CD4-positive, alpha-beta memory T cell (primary cell): ENCODE measurements at regions of chr14 and their contacts with region 1.

Region 1: DNA sequence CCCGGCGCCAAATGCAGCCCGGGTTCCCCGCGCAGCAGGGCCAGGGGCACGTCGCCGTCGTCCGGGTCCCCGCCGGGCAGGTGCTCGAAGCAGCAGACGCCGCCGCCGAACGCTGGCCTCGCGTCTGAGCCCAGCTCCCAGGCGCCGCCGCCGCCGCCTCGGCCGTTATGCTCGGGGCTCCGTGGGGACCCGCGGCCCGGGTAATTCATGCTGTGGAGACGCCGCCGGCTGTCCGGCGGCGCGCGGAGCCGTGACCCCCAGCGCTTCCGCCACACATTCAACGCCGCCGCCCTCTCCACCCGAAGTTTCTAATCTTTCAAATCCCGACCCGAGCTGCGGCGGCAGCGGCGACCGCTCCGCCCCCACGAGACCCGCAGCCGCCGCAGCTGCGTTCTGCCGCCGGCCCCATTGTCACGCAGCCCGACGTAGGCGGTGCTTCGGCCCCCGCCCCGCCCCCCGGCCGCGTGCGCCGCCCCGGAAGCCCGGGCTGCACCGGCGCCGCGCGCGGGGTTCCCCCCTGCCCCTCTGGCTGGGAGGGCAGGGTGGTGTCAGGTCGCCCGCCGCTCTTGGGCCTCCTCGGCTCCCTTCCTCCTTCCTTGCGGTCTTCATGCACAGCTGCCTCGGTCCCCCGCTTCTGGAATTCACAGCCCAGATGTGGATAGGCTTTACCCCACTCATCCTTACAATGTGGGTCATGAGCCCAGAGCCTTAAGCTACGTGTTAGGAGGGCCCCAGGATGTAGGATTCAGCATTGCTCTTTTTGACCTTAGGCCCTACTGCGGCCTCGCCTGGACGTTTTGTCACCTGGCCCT is at the start of gene DDHD1:
- DNase-seq: peak; percentile 84 to 89 (median 87)
- H3K4me3 ChIP-seq: peak within 1 kb of the TSS; percentile 87 to 90
- H3K4me3 Mint-ChIP-seq: peak within 1 kb of the TSS; percentile 95 to 100 (median 99)
- H3K27ac ChIP-seq: peak within 1 kb of the TSS; percentile 87
- H3K27ac Mint-ChIP-seq: peak within 1 kb of the TSS; percentile 98 to 99 (median 99)
- H3K4me1 ChIP-seq: peaks cover 46% of the 10 kb centered on the region
- H3K4me1 Mint-ChIP-seq: peaks cover 36 to 58% (median 45%) of the 10 kb centered on the region in 4 donors
- H3K27me3 ChIP-seq: no peaks in the 10 kb centered on the region
- H3K27me3 Mint-ChIP-seq: no peaks in the 10 kb centered on the region
- total RNA-seq, gene DDHD1: 47.0 to 53.5 TPM

Region 2: DNA sequence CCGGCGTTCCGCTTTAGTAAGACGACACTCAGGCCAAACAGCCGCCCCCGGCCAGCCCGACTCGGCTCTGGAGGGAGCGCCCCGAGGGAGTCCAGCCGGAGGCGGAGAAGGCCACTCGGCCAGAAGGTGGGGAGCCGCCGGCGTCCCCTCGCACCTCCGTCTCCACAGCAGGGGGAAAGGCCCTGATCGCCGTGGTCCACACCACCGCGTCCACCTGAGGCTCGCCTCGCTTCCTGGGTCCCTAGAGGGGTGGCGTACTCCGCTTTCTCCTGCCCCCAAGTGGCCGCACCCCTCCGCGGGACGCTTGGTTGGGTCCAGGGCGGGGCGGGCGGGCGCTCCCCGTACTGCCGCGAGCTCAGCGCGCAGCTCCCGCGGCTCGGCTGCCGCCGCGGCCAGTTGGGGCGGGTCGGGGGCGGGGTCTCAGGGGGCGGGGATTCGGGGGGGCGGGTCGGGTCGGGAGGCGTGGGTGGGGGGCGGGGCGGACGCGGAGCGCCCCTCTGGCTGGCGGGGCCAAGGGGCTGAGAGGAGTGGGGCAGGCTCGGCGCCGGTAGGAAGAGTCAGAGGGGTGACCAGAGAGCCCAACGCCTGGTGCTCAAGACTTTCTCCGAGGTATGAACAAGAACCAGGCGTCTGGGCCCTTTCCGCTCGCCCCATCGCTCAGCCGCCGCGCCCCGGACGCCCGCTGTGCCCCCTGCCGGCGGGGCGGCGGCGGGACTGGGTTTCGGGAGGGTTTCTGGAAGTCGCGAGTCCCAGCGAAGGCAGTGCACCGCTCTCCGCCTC is 1501.5 kb before region 1 on chr14 and contains the start of gene FRMD6:
- CTCF ChIA-PET with region 1: interaction called, 3 read pairs
- POLR2A ChIA-PET with region 1: no interaction called
- intact Hi-C with region 1: loop called (anchors 5 kb)
- DNase-seq: peak; percentile 82 to 89 (median 83)
- H3K4me3 ChIP-seq: peak within 1 kb of the TSS; percentile 47 to 77
- H3K4me3 Mint-ChIP-seq: peak within 1 kb of the TSS; percentile 82 to 92 (median 85)
- H3K27ac ChIP-seq: peak within 1 kb of the TSS; percentile 36
- H3K27ac Mint-ChIP-seq: peak within 1 kb of the TSS in 6 of 7 donors; percentile 66 to 84 (median 72)
- H3K4me1 ChIP-seq: peaks cover 19% of the 10 kb centered on the region
- H3K4me1 Mint-ChIP-seq: peaks cover 7 to 16% (median 11%) of the 10 kb centered on the region in 4 donors
- H3K27me3 ChIP-seq: peaks cover 14% of the 10 kb centered on the region
- H3K27me3 Mint-ChIP-seq: peaks cover 14 to 18% of the 10 kb centered on the region in 2 donors
- total RNA-seq, gene FRMD6: 0.80 to 0.81 TPM

Region 3: GRCh38 chr14:52791203-52792096 is 361.6 kb before region 1 on chr14 and contains the start of gene GNPNAT1:
- CTCF ChIA-PET with region 1: no interaction called
- POLR2A ChIA-PET with region 1: interaction called, 8 read pairs
- intact Hi-C with region 1: loop called (anchors 1 kb)
- DNase-seq: peak; percentile 90 to 93 (median 92)
- H3K4me3 ChIP-seq: peak within 1 kb of the TSS; percentile 57 to 90
- H3K4me3 Mint-ChIP-seq: peak within 1 kb of the TSS; percentile 88 to 97 (median 92)
- H3K27ac ChIP-seq: peak within 1 kb of the TSS; percentile 70
- H3K27ac Mint-ChIP-seq: peak within 1 kb of the TSS; percentile 90 to 96 (median 94)
- H3K4me1 ChIP-seq: peaks cover 32% of the 10 kb centered on the region
- H3K4me1 Mint-ChIP-seq: peaks cover 27 to 48% (median 36%) of the 10 kb centered on the region in 4 donors
- H3K27me3 ChIP-seq: no peaks in the 10 kb centered on the region
- H3K27me3 Mint-ChIP-seq: no peaks in the 10 kb centered on the region
- total RNA-seq, gene GNPNAT1: 10.0 to 15.2 TPM

Region 4: DNA sequence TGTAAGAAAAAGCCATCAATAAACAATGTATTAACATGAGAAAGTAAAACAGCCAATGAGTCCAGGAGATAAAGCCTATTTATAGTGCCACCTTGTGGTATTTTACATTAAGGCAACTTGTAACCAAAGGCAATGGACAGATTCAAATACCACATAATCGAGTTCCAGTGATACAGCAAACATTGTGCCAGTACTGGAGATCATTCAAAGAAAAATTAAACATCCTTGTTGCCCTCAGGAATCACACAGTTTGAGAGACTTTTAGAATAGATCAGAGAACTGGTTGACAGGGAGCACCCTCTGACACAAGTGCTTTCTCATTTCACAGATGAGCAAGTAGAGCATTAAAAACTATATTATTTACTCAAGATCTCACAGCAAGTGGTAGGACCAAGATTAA is 98.1 kb before region 1 on chr14:
- CTCF ChIA-PET with region 1: interaction called, 23 read pairs
- POLR2A ChIA-PET with region 1: interaction called, 4 read pairs
- intact Hi-C with region 1: loop called (anchors 5 kb)
- DNase-seq: peak in 4 of 5 donors; percentile 20 to 39 (median 30)
- H3K4me3 ChIP-seq: no peak overlapping the region
- H3K4me3 Mint-ChIP-seq: no peak overlapping the region
- H3K27ac ChIP-seq: no peak overlapping the region
- H3K27ac Mint-ChIP-seq: peak overlapping the region in 3 of 7 donors; percentile 30 to 66 (median 31)
- H3K4me1 ChIP-seq: no peaks in the 10 kb centered on the region
- H3K4me1 Mint-ChIP-seq: peaks cover 0 to 3% (median under 1%) of the 10 kb centered on the region in 4 donors
- H3K27me3 ChIP-seq: no peaks in the 10 kb centered on the region
- H3K27me3 Mint-ChIP-seq: no peaks in the 10 kb centered on the region

Region 5: DNA sequence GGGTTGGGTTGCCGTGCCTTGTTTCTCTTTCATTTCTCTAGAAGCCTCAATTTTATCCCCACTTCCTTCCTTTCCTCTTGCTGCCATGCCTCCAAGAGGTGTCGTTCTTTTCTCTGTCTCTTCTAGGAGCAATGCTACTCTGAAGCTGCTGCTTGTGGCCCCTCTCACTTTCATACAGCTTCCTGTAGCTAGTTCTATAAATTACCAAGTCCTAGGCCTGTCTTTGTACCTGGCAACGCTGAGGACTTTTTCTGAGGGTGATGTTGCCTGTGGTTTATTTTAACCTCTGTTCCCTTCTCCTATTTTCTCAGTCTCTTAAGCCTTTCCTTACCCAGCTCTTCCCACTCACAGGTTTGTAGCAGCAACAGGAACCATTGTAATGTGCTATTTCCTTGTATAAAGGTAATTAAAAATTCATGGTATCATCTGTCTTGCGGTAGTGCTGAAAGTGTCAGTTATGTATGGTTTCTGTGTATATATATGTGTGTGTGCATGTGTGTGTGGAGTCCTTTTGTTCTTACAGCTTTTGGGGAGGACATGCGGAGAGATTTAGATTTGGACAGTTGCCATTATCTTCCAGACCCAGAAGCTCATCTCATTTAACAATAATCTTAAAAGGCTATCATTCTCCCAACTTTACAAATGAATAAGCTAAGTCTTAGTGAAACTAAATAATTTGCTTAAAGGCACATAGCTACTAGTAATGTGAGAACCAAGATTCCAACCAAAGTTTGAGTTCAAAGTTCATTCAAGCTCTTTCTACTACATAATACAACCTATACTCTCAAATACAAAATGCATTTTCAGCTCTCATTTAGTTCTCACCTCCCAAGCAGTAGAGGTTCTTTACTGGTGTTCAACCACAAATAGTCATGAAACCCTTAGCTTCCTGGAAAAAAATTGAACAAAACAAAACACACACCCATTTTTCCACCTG is 43.7 kb before region 1 on chr14:
- CTCF ChIA-PET with region 1: interaction called, 36 read pairs
- POLR2A ChIA-PET with region 1: interaction called, 156 read pairs
- intact Hi-C with region 1: loop called (anchors 1 kb)
- DNase-seq: peak; percentile 54 to 67 (median 64)
- H3K4me3 ChIP-seq: peak overlapping the region; percentile 48 to 57
- H3K4me3 Mint-ChIP-seq: no peak overlapping the region
- H3K27ac ChIP-seq: peak overlapping the region; percentile 71
- H3K27ac Mint-ChIP-seq: no peak overlapping the region
- H3K4me1 ChIP-seq: peaks cover 31% of the 10 kb centered on the region
- H3K4me1 Mint-ChIP-seq: peaks cover 2 to 30% (median 17%) of the 10 kb centered on the region in 4 donors
- H3K27me3 ChIP-seq: no peaks in the 10 kb centered on the region
- H3K27me3 Mint-ChIP-seq: no peaks in the 10 kb centered on the region